Heart right ventricle (tissue), 16 donors: ENCODE measurements at regions of chr3 and their contacts with region 1.

Region 1: GRCh38 chr3:127857333-127857732 is 35.0 kb upstream of the MGLL start:
- DNase-seq: no peak
- ATAC-seq: no peak
- H3K4me3 ChIP-seq: no peak overlapping the region
- H3K27ac ChIP-seq: no peak overlapping the region
- H3K4me1 ChIP-seq: no peaks in the 10 kb centered on the region
- H3K27me3 ChIP-seq: no peaks in the 10 kb centered on the region
- CTCF ChIP-seq: peak in 3 of 9 donors; percentile 9 to 29 (median 11)

Region 2: DNA sequence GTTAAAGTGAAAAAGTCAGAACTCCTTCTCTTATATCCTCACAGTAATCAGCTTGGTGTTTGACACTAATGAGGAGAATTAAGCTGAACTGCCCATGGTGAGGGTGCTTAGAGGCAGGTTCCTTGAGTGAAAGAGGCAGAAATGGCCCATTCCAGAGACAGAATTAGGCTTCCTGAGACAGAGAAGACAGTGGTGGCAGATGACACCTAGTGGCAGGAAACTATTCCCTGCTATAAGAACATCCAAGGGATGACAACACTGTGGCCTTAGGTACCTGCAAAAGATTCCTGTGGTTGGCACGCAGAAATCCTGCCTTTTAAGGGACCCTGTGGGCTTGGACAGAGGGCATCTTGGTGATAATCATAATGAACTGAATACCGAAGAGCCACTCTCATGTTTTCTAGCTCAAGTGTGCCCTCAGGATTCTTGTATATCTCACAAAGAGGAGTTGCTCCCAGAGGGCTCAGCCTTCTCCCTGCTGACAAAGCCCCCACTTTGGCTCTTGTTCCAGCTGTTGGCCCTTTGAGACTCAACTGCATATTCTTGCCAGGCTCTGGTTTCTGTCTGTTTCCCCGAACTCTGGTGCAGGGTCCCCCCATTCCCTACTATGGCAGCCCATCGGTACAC is 113.7 kb after region 1 on chr3:
- intact Hi-C with region 1: loop called in 3 of 10 experiments (anchors 5 to 10 kb)
- DNase-seq: peak in 1 of 2 donors; percentile 28
- ATAC-seq: peak; percentile 69 to 87 (median 79)
- H3K4me3 ChIP-seq: no peak overlapping the region
- H3K27ac ChIP-seq: no peak overlapping the region
- H3K4me1 ChIP-seq: peaks cover 0 to 9% (median 0%) of the 10 kb centered on the region in 9 donors
- H3K27me3 ChIP-seq: no peaks in the 10 kb centered on the region
- CTCF ChIP-seq: peak; percentile 59 to 82 (median 70)